Common myeloid progenitor, CD34-positive (primary cell): ENCODE measurements at regions of chr2 and their contacts with region 1.

Region 1: GRCh38 chr2:60806988-60807681 is 51.1 kb downstream of the PAPOLG start:
- DNase-seq: peak in 2 of 3 donors; percentile 14 to 15
- H3K4me3 ChIP-seq: no peak overlapping the region
- H3K27ac ChIP-seq: peak overlapping the region in 1 of 2 experiments; percentile 41
- H3K4me1 ChIP-seq: peaks cover 5 to 16% (median 10%) of the 10 kb centered on the region in 4 experiments
- H3K27me3 ChIP-seq: no peaks in the 10 kb centered on the region

Region 2: DNA sequence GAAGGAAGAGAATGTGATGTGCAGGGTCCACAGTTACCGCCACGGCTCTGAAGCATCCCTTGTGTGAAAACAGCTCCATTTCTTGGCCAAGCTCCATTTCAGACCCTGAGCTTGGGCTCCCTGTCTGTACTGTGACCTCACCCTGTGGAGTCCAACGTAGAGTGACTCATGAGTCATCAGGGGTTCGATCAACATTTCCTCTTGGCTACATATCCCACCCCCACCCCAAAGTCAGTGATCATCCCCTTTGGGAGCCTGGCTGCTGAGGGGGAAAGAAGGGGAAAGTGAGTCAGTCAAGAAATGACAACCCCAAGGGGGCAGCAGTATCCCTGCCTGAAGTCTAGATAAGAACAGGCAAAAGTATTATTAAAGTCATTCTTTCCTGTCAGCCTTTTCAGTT is 11.1 kb after region 1 on chr2:
- CTCF ChIA-PET with region 1: interaction called, 10 read pairs
- POLR2A ChIA-PET with region 1: interaction called, 3 read pairs
- DNase-seq: peak; percentile 15 to 27 (median 24)
- H3K4me3 ChIP-seq: no peak overlapping the region
- H3K27ac ChIP-seq: no peak overlapping the region
- H3K4me1 ChIP-seq: peaks cover 0 to 9% (median 0%) of the 10 kb centered on the region in 4 experiments
- H3K27me3 ChIP-seq: no peaks in the 10 kb centered on the region